ENCODE measurements at regions of chr22 and their contacts with region 1.

Region 1: GRCh38 chr22:45240810-45241631 is at the start of gene KIAA0930:
- DNase-seq: peak; percentile 75 to 91
- H3K4me3 ChIP-seq: peak within 1 kb of the TSS; percentile 73 to 84
- H3K27ac ChIP-seq: peak within 1 kb of the TSS; percentile 72 to 84
- H3K4me1 ChIP-seq: peaks cover 0 to 24% (median 18%) of the 10 kb centered on the region in 4 donors
- H3K27me3 ChIP-seq: no peaks in the 10 kb centered on the region
- CTCF ChIP-seq: no peak

Region 2: GRCh38 chr22:45309472-45310227 is 68.6 kb after region 1 on chr22 and contains the start of gene FAM118A:
- intact Hi-C with region 1: loop called (anchors 1 kb)
- DNase-seq: peak; percentile 86 to 96
- H3K4me3 ChIP-seq: peak within 1 kb of the TSS; percentile 92 to 100
- H3K27ac ChIP-seq: peak within 1 kb of the TSS; percentile 90 to 91
- H3K4me1 ChIP-seq: peaks cover 0 to 26% (median 19%) of the 10 kb centered on the region in 4 donors
- H3K27me3 ChIP-seq: no peaks in the 10 kb centered on the region
- CTCF ChIP-seq: peak in 1 of 2 experiments; percentile 14